HepG2 (cell line): ENCODE measurements at regions of chr20 and their contacts with region 1.

Region 1: DNA sequence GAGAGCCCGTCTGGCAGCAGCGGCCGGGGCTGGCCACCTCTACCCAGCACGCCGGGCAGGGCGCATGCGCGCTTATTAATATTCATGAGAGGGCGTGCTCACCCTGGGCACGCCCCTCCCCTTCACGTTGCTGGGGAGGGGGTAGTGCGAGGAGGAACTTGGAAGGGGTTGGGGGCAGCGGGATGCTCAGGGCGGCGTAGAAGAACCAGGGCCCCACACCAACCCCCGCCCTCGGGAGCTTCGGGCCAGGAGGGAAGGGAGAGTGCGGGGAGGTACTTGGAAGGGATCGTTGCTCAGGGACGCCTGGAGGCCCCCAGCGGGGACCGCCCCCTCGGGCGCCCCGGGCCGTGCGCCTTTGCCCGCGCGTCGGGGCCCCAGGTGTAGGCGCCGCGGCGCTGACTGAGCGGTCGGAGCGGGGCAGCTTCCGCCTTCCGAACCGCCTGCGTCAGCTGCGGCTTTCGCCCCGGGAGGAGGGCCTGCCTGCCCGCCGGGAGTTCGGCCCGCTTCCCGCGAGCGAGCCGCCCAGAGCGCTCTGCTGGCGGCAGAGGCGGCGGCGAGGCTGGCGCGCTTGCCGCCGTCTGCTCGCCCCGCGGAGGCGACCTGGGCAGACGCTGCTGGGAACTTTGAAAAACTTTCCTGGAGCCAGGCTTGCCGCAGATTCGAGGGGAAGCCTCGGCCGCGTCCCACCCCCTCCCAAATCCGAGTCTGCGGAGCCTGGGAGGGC is at the start of gene JAG1:
- DNase-seq: peak; percentile 97
- ATAC-seq: peak; percentile 77
- H3K4me3 ChIP-seq: peak within 1 kb of the TSS; percentile 85 to 94 (median 91)
- H3K27ac ChIP-seq: peak within 1 kb of the TSS; percentile 89
- H3K4me1 ChIP-seq: peaks cover 37% of the 10 kb centered on the region
- H3K27me3 ChIP-seq: no peaks in the 10 kb centered on the region; a peak in 1 of 5 replicates
- CTCF ChIP-seq: peak; percentile 22; the same call in 1 of the 2 replicates
- EP300 ChIP-seq: peak in 1 of 2 experiments; percentile 46; a peak in 1 of 4 replicates
- POLR2A ChIP-seq: peak; percentile 82 to 85
- RAD21 ChIP-seq: peak; percentile 66
- total RNA-seq, gene JAG1: 18.1 and 56.3 TPM in 2 replicates

Region 2: DNA sequence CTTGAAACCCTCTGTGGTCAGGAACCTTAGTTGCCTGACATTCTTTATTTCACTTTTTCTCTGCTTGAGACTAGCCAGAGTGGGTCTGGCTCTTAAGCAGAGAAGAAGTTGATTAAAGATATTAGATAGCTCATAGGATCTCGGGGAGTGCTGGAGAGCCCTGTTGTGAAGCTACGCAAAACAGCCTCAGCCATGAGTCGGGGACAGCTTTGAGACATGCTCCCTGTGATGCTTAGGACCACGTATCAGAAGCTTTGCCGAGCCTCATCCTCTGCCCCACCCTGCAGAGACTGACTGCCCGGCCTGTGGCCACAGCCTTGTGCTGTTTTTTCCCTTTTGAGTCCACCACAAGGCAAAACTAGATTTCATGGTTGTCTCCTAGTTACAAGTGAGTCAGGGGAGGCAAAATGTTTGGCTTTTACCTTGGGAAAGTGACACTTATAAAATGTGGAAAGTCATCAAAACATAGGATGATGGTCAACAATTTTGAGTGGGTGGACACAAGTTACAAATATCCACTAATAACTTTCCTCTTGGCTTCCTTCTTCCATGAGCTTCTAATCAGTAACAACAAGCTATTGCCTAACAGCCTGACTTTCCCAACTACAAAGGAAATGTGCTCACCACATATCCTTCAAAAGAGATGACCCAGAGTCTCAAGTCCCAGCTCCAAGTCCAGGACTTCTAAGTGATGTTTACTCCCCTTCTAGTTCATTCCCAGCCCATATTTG is 108.8 kb before region 1 on chr20:
- CTCF ChIA-PET with region 1: no interaction called
- POLR2A ChIA-PET with region 1: interaction called, 57 read pairs
- in situ Hi-C with region 1: no loop called
- intact Hi-C with region 1: loop called (anchors 1 kb)
- DNase-seq: peak; percentile 99
- ATAC-seq: peak; percentile 82
- H3K4me3 ChIP-seq: peak overlapping the region in 1 of 3 experiments; percentile 16; a peak in 1 of 6 replicates
- H3K27ac ChIP-seq: peak overlapping the region; percentile 97
- H3K4me1 ChIP-seq: peaks cover 62% of the 10 kb centered on the region
- H3K27me3 ChIP-seq: no peaks in the 10 kb centered on the region
- CTCF ChIP-seq: no peak
- EP300 ChIP-seq: peak; percentile 91 to 100
- POLR2A ChIP-seq: peak; percentile 24 to 49; a peak in 2 of 4 replicates
- RAD21 ChIP-seq: 0 out of 2 replicates have a peak, but pooled peaks have one; percentile 12

Region 3: GRCh38 chr20:10660661-10661060 is 13.5 kb before region 1 on chr20:
- CTCF ChIA-PET with region 1: no interaction called
- POLR2A ChIA-PET with region 1: interaction called, 43 read pairs
- in situ Hi-C with region 1: no loop called
- intact Hi-C with region 1: no loop called
- DNase-seq: no peak
- ATAC-seq: no peak; the same call in 2 of the 3 replicates
- H3K4me3 ChIP-seq: no peak overlapping the region
- H3K27ac ChIP-seq: peak overlapping the region; percentile 7
- H3K4me1 ChIP-seq: peaks cover 71% of the 10 kb centered on the region
- H3K27me3 ChIP-seq: no peaks in the 10 kb centered on the region
- CTCF ChIP-seq: no peak
- EP300 ChIP-seq: no peak
- POLR2A ChIP-seq: no peak; a peak in 1 of 4 replicates
- RAD21 ChIP-seq: no peak

Region 4: GRCh38 chr20:10826111-10826510 is 152.0 kb after region 1 on chr20:
- CTCF ChIA-PET with region 1: no interaction called
- POLR2A ChIA-PET with region 1: no interaction called
- in situ Hi-C with region 1: no loop called
- intact Hi-C with region 1: loop called (anchors 10 kb)
- DNase-seq: no peak
- ATAC-seq: no peak
- H3K4me3 ChIP-seq: no peak overlapping the region
- H3K27ac ChIP-seq: no peak overlapping the region
- H3K4me1 ChIP-seq: no peaks in the 10 kb centered on the region
- H3K27me3 ChIP-seq: peaks cover 0 to 6% of the 10 kb centered on the region in 2 experiments; a peak in 2 of 5 replicates
- CTCF ChIP-seq: no peak
- EP300 ChIP-seq: no peak
- POLR2A ChIP-seq: no peak
- RAD21 ChIP-seq: no peak

Region 5: DNA sequence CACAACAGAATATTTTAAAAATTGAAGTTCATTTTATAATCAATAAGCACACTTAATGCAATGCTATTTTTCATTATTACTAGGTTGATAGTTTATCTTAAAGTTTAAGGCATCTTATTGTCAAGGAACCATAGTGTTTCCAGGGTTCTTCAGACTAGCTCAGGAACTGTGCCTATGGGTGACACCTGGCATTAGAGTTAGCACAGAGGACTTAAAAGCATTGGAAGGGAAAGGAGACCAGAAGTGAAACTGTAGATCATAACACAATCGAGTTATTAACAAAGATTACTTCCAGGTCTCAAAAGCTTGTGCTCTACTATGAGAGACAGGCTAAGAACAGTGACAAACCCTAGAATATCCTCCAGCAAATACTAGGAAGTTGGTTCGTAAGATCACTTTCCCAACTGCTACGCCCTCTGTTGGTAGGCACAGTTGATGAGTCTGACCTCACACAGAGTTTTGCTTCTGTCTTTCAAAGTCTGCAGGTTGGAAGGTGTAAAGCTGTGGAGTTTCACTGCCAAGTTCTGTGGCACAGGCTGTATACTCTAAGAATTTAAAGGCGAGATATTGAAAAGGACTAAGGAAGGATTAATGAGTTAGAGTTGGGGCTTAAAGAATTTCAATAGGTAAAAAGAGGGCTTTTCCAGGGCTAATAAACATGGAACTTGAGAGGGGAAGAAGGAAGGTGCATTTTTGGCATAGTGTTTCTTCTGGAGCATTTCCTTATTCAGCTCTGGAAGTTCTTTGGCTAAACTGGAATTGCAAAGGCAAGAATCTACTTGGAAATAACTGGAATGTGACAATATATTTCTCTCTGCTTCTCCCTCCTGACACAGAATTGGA is 531.0 kb after region 1 on chr20:
- CTCF ChIA-PET with region 1: interaction called, 3 read pairs
- POLR2A ChIA-PET with region 1: interaction called, 9 read pairs
- in situ Hi-C with region 1: loop called (anchors 5 kb)
- intact Hi-C with region 1: loop called (anchors 2 kb)
- DNase-seq: peak; percentile 71
- ATAC-seq: peak; percentile 98
- H3K4me3 ChIP-seq: no peak overlapping the region
- H3K27ac ChIP-seq: no peak overlapping the region
- H3K4me1 ChIP-seq: peaks cover 11% of the 10 kb centered on the region
- H3K27me3 ChIP-seq: no peaks in the 10 kb centered on the region
- CTCF ChIP-seq: peak; percentile 91
- EP300 ChIP-seq: no peak
- POLR2A ChIP-seq: no peak
- RAD21 ChIP-seq: peak; percentile 74

Region 6: DNA sequence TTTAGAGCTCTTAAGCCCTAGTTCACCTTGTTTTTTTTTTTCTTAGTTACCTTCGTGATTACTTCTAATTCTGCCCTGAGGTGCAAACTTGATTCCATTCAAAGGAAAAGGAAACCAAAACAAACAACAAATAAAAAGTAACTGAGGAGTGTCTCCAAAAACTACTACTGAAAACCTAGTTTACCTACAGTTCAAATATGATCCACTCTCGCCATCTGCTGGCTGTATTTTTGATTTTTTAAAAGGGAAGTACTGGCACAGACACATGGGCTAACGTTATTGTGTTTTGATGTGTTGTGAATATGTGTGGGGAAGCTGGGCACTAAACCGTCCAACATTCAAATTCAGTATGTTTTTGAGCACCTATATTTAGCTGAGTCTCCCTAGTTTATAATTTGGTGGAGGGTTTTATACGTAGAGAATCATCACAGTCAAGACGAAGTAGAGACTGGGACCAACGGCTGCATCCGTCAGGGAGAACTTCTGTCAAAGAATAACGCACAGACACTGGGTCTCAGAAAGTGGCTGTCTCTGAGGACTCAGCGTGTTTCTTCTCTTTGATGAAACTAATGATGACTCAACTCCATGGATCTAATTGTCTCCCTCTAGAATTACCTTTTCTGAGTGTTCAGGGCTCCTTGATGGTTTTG is 870.0 kb after region 1 on chr20:
- CTCF ChIA-PET with region 1: no interaction called
- POLR2A ChIA-PET with region 1: no interaction called
- in situ Hi-C with region 1: loop called (anchors 5 kb)
- intact Hi-C with region 1: loop called (anchors 10 kb)
- DNase-seq: peak; percentile 72
- ATAC-seq: peak; percentile 88
- H3K4me3 ChIP-seq: no peak overlapping the region
- H3K27ac ChIP-seq: no peak overlapping the region
- H3K4me1 ChIP-seq: peaks cover 12% of the 10 kb centered on the region
- H3K27me3 ChIP-seq: no peaks in the 10 kb centered on the region; a peak in 1 of 5 replicates
- CTCF ChIP-seq: peak; percentile 85
- EP300 ChIP-seq: no peak
- POLR2A ChIP-seq: no peak
- RAD21 ChIP-seq: peak; percentile 41; the same call in 1 of the 2 replicates